ENCODE measurements at regions of chr13 and their contacts with region 1.

Region 1: DNA sequence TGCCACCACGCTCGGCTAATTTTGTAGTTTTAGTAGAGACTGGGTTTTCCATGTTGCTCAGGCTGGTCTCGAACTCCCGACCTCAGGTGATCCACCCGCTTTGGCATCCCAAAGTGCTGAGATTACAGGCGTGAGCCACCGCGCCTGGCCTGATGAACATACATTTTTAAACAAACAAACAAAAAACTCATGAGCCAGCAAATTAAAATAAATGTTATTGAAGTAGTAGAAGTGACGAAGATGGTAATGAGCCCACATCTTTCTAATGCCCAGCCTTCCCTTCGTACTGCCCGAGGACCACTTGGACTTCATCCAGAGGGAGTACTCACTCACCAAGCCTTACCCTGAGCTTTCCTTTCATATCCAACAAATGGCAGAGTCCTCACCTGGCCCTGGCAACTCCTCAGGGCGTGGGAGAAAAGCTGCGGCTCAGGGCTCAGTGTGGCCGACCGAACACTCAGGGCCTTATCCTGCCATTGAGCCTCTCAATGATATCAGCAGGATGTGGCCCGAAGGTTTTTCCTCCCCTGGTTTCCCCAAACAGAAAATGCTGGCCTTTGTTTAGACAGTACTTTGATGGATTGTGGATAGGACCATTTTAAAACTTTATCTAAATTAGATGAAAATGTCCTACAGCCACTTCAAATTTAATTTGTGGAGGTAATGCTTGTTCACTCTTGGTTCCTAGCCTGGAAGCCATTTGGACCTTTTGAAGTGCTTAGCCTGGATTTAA is 22.8 kb upstream of the ABCC4 start:
- DNase-seq: no peak
- ATAC-seq: no peak
- H3K4me3 Mint-ChIP-seq: no peak overlapping the region
- H3K27ac Mint-ChIP-seq: no peak overlapping the region
- H3K4me1 Mint-ChIP-seq: no peaks in the 10 kb centered on the region
- H3K27me3 Mint-ChIP-seq: peaks cover 2% of the 10 kb centered on the region

Region 2: DNA sequence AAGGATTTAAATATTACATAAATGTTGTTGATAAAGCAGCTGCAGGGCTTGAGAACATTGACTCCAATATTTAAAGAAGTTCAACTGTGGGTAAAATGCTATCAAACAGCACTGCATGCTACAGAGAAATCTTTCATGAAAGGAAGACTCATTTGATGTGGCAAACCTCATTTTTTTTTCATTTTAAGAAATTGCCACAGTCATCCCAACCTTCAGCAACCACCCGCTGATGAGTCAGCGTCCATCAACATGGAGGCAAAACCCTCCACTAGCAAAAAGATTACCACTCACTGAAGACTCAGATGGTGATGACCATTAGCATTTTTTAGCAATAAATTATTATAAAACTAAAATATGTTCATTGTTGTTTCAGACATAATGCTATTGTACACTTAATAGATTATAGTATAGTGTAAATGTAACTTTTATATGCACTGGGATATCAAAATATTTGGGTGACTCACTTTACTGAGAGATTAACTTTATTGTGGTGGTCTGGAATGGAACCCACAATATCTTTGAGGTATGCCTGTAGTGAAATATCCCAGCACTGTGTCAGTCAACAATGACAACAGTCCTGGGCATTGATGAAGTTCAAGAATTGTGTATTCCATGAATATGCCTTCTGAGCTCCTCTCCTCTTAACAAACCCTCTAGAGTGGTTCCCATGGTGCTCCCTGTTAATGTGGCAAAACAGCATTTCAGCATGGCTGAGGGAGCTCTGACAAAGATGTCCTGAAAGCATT is 559.3 kb before region 1 on chr13:
- CTCF ChIA-PET with region 1: no interaction called
- POLR2A ChIA-PET with region 1: interaction called, 13 read pairs
- intact Hi-C with region 1: no loop called
- DNase-seq: peak; percentile 46
- ATAC-seq: peak; percentile 51
- H3K4me3 Mint-ChIP-seq: no peak overlapping the region
- H3K27ac Mint-ChIP-seq: no peak overlapping the region
- H3K4me1 Mint-ChIP-seq: no peaks in the 10 kb centered on the region
- H3K27me3 Mint-ChIP-seq: peaks cover 44% of the 10 kb centered on the region